CD4-positive, alpha-beta memory T cell (primary cell): ENCODE measurements at regions of chr16 and their contacts with region 1.

Region 1: GRCh38 chr16:20900299-20901067 is at the starts of genes DCUN1D3 and LYRM1:
- DNase-seq: peak; percentile 81 to 92 (median 85)
- H3K4me3 ChIP-seq: peak within 1 kb of the TSS; percentile 70 to 91
- H3K4me3 Mint-ChIP-seq: peak within 1 kb of the TSS; percentile 93 to 99 (median 94)
- H3K27ac ChIP-seq: peak within 1 kb of the TSS; percentile 88
- H3K27ac Mint-ChIP-seq: peak within 1 kb of the TSS; percentile 94 to 99 (median 97)
- H3K4me1 ChIP-seq: peaks cover 57% of the 10 kb centered on the region
- H3K4me1 Mint-ChIP-seq: peaks cover 48 to 76% (median 60%) of the 10 kb centered on the region in 4 donors
- H3K27me3 ChIP-seq: no peaks in the 10 kb centered on the region
- H3K27me3 Mint-ChIP-seq: no peaks in the 10 kb centered on the region
- total RNA-seq, gene DCUN1D3: 6.2 to 7.5 TPM
- total RNA-seq, gene LYRM1: 25.8 to 27.4 TPM

Region 2: DNA sequence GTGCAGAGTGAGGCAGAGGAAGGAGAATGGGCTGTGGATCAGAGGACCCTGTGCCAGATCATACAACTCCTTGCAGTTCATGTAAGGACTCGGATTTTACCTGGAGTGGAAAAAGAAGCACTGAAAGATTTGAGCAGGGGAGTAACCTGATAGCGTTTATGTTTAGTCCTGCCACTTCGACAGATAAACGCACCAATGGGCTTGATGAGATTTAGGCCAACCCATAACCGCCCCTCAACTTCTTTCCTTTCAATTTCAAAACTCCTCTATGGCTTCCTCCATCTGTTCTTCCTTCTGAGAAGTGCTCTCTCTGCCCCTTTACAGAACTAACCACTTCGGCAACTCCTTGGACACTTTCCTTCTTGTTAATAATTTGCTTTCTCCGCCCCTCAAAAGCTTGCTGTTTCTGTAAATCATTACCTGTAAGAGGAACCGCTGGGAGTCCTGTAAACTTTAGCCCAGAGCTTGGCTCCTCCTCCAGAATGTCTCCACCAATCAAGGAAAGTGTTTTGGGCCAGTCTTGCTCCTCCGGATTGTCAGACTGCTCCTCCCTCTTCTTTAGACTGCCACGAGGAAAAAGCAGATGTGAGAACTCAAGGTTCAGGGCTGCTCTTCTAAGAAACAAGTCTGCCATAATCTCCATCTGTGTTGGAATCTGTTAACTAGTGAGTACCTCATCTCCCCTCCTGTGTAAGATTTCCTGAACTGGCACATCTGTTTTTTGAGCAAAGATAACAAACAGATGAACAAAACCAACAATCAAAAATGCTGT is 136.8 kb before region 1 on chr16 and contains the start of gene ACSM3:
- CTCF ChIA-PET with region 1: no interaction called
- POLR2A ChIA-PET with region 1: interaction called, 4 read pairs
- intact Hi-C with region 1: loop called (anchors 5 kb)
- DNase-seq: peak; percentile 76 to 84 (median 80)
- H3K4me3 ChIP-seq: peak within 1 kb of the TSS; percentile 49
- H3K4me3 Mint-ChIP-seq: peak within 1 kb of the TSS; percentile 88 to 97 (median 94)
- H3K27ac ChIP-seq: peak within 1 kb of the TSS; percentile 64
- H3K27ac Mint-ChIP-seq: peak within 1 kb of the TSS; percentile 80 to 99 (median 97)
- H3K4me1 ChIP-seq: peaks cover 20% of the 10 kb centered on the region
- H3K4me1 Mint-ChIP-seq: peaks cover 12 to 34% (median 24%) of the 10 kb centered on the region in 4 donors
- H3K27me3 ChIP-seq: no peaks in the 10 kb centered on the region
- H3K27me3 Mint-ChIP-seq: no peaks in the 10 kb centered on the region
- total RNA-seq, gene ACSM3: 3.3 to 6.7 TPM

Region 3: DNA sequence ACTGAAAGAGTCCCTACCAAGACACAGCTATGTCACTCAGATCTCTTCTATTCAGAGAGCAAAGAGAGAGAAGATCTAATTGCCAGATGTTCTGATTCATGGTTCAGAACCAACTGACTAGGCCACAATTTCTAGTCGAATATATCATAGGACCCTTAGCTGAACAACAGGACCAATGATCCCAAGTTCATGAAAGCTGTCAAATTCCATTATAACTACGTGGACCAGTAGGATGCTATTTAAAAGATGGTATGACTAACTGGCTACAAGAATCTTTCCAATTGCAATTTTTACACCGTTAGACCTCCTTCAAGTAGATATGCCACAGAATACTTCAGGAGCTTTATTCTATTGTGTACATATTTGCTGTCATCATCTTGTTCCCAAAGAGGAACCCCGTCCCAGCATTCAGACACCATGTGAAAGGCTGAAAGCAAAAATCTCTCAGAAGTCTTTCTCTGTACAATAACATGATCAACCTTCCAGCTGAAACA is 26.3 kb before region 1 on chr16:
- CTCF ChIA-PET with region 1: interaction called, 26 read pairs
- POLR2A ChIA-PET with region 1: interaction called, 30 read pairs
- intact Hi-C with region 1: loop called (anchors 1 kb)
- DNase-seq: no peak
- H3K4me3 ChIP-seq: peak overlapping the region in 1 of 2 donors; percentile 17
- H3K4me3 Mint-ChIP-seq: peak overlapping the region; percentile 61 to 87 (median 77)
- H3K27ac ChIP-seq: peak overlapping the region; percentile 47
- H3K27ac Mint-ChIP-seq: peak overlapping the region; percentile 81 to 96 (median 89)
- H3K4me1 ChIP-seq: peaks cover 39% of the 10 kb centered on the region
- H3K4me1 Mint-ChIP-seq: peaks cover 34 to 52% (median 37%) of the 10 kb centered on the region in 4 donors
- H3K27me3 ChIP-seq: no peaks in the 10 kb centered on the region
- H3K27me3 Mint-ChIP-seq: no peaks in the 10 kb centered on the region

Region 4: DNA sequence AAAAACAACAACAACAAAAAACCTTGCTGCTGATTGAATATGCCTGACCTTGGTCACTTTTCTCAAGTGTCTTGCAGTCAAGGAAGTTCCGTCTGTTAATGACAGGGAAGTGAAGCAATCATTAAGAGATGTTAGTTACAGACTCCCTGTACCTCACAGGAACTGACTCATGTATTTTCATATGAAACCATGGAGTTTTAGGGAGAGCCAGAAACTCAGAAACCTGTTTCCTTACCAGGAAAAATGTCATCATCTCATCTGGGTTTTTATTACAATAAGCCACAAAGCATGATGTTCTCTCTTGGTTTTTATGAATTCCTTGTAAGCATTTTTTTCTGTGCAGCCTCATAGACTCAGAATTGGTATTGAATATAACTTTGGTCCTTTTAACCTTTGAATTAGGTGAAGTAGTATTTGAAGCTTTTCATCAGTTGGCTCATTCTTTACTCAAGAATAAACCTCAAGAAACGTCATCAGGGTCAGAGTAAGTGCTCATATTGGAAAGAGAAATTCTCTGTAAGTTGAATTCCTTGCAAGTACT is 10.4 kb after region 1 on chr16:
- CTCF ChIA-PET with region 1: no interaction called
- POLR2A ChIA-PET with region 1: interaction called, 10 read pairs
- intact Hi-C with region 1: no loop called
- DNase-seq: no peak
- H3K4me3 ChIP-seq: no peak overlapping the region
- H3K4me3 Mint-ChIP-seq: no peak overlapping the region
- H3K27ac ChIP-seq: no peak overlapping the region
- H3K27ac Mint-ChIP-seq: no peak overlapping the region
- H3K4me1 ChIP-seq: no peaks in the 10 kb centered on the region
- H3K4me1 Mint-ChIP-seq: peaks cover 5 to 10% (median 7%) of the 10 kb centered on the region in 4 donors
- H3K27me3 ChIP-seq: no peaks in the 10 kb centered on the region
- H3K27me3 Mint-ChIP-seq: no peaks in the 10 kb centered on the region

Region 5: GRCh38 chr16:21611546-21612384 is 711.3 kb after region 1 on chr16:
- CTCF ChIA-PET with region 1: no interaction called
- POLR2A ChIA-PET with region 1: no interaction called
- intact Hi-C with region 1: no loop called
- DNase-seq: no peak
- H3K4me3 ChIP-seq: no peak overlapping the region
- H3K4me3 Mint-ChIP-seq: peak overlapping the region; percentile 1 to 68 (median 41)
- H3K27ac ChIP-seq: no peak overlapping the region
- H3K27ac Mint-ChIP-seq: peak overlapping the region; percentile 9 to 54 (median 25)
- H3K4me1 ChIP-seq: peaks cover 71% of the 10 kb centered on the region
- H3K4me1 Mint-ChIP-seq: peaks cover 52 to 88% (median 74%) of the 10 kb centered on the region in 4 donors
- H3K27me3 ChIP-seq: no peaks in the 10 kb centered on the region
- H3K27me3 Mint-ChIP-seq: no peaks in the 10 kb centered on the region